IMR-90 (cell line): ENCODE measurements at regions of chrX and their contacts with region 1.

Region 1: DNA sequence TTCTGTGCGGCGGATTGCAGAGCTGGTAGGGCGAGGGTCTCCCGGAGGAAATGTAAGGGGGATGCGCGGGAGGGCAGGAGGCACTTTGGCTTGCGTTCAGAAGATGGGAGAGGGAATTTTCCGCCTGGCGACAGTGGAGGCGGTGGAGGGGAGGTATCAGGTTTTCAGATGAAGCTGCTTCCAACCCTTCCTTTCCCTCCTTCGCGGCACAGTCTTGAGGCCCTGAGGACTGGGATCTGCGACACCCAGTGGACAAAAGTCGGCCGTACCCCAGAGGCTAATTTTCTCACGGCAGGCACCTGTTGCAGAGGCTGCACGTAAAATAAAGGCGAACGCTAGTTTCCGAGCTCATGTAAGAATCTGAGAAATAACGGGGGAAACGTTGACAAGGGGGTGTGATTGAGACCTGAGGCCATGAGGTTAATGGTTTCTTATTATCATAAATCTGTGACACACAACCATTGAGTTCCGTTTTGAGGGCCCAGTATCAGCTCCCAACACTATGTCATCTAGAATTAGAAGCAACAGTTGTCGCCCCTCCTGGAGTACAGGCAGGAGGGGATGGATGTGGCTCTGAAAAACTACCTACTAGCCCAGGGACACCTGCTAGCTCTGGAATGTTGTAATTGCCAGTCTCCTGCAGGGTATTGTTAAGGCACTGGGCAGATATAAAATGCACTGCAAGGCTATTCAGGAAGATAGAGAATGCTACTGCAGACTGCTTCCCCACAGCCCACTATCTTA is 1.1 kb downstream of the ZCCHC18 start:
- DNase-seq: peak; percentile 53
- ATAC-seq: peak; percentile 56
- H3K4me3 ChIP-seq: peak overlapping the region; percentile 96
- H3K27ac ChIP-seq: no peak overlapping the region
- H3K4me1 ChIP-seq: no peaks in the 10 kb centered on the region
- H3K27me3 ChIP-seq: peaks cover 2% of the 10 kb centered on the region; the same call in 1 of the 2 replicates
- CTCF ChIP-seq: peak; percentile 47
- POLR2A ChIP-seq: no peak
- RAD21 ChIP-seq: peak; percentile 33; the same call in 1 of the 2 replicates

Region 2: DNA sequence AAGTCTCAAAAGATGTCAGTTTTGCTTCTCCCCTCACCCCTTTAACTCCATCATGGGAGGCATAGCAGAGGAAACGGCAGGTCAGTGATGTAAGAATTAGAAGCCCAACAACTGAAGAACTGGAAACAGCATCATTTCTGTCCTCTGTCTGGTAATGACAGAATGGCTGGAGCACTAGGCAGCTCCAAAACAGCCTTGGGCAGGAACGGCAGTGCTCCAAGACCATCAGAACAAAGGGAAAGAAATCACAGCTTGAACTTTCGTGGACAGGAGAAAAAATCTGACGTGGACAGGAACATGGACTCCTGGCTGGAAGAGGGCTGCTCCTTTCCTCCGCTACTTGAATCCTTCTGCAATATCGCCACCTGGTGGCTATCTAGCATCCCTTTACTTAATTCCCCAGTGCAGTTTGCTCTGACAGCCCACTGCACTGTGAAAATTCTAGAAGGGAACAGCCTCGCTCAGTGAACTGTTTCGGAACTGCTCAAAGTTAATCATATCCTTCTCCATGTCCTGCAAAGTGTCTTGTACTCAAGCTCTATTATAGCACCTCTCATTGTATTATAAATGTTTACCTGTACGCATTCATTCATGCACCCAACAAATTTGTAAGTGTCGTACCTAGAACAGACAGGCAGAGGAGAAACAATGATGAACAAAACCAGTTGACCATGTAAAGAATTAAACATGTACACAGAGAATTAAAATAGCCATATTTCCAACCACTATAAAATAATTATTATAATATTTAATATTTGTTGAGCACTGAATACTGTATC is 23.0 kb after region 1 on chrX:
- CTCF ChIA-PET with region 1: no interaction called
- POLR2A ChIA-PET with region 1: no interaction called
- dilution Hi-C with region 1: no loop called
- in situ Hi-C with region 1: no loop called
- intact Hi-C with region 1: loop called (anchors 1 kb)
- DNase-seq: peak; percentile 91
- ATAC-seq: peak; percentile 96
- H3K4me3 ChIP-seq: peak overlapping the region; percentile 73
- H3K27ac ChIP-seq: peak overlapping the region; percentile 90
- H3K4me1 ChIP-seq: peaks cover 2% of the 10 kb centered on the region; the same call in 1 of the 2 replicates
- H3K27me3 ChIP-seq: peaks cover 2% of the 10 kb centered on the region; the same call in 1 of the 2 replicates
- CTCF ChIP-seq: peak; percentile 77
- POLR2A ChIP-seq: no peak
- RAD21 ChIP-seq: peak; percentile 78

Region 3: DNA sequence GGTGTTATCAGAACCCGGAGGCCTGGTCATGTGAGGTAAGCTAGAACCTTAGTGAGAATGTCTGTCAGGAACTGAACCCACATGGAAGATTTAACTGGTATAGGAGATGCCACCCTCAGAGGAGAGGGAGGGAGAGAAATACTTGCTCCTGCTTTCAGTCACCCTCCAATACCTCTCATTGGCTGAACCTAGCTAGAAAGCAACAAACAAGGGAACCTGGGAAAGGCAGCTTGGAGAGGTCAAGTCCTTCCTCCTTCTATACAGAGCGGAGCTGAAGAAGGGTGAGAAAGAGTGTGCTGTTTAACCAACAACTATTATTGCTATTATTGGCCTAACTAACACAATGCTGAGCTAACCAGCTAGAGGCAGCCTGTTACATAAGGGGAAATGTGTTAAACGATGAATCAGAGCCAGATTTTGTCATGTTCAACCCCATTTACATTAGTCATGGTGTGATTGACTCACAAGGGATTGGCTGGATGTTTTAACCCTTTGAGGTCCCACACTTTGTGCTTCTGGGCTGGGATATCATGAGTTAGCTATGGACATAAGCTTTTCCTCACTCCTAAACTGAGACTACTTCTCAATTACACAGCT is 237.9 kb after region 1 on chrX:
- CTCF ChIA-PET with region 1: no interaction called
- POLR2A ChIA-PET with region 1: no interaction called
- dilution Hi-C with region 1: no loop called
- in situ Hi-C with region 1: no loop called
- intact Hi-C with region 1: no loop called
- DNase-seq: peak; percentile 82
- ATAC-seq: peak; percentile 62
- H3K4me3 ChIP-seq: no peak overlapping the region
- H3K27ac ChIP-seq: no peak overlapping the region
- H3K4me1 ChIP-seq: no peaks in the 10 kb centered on the region
- H3K27me3 ChIP-seq: peaks cover 15% of the 10 kb centered on the region
- CTCF ChIP-seq: no peak
- POLR2A ChIP-seq: no peak
- RAD21 ChIP-seq: no peak